Spleen (tissue), 13 donors: ENCODE measurements at regions of chr3 and their contacts with region 1.

Region 1: DNA sequence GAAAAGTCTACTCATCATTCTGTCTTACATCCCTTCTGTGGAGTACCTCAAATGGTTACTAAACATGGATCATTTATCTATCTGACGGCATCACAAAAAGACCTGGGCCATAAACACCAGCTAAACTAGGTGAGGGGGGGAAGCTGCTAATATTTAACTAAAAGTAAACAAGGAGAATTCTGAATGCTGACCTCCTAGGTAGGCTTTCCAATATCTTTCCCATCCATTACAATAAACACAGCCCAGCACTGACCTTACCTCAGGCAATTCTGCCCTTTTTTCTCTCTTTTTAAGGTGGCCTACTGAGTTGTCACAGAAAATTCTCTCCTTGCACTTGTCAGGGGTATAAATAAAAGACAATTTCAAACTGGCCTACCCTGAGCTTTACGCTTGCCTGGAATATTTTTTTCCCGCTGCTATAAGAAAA is 33.1 kb downstream of the USF3 start:
- DNase-seq: no peak
- H3K4me3 ChIP-seq: no peak overlapping the region
- H3K27ac ChIP-seq: peak overlapping the region in 1 of 8 donors; percentile 75
- H3K4me1 ChIP-seq: peaks cover 0 to 55% (median 21%) of the 10 kb centered on the region in 6 donors
- H3K27me3 ChIP-seq: no peaks in the 10 kb centered on the region
- CTCF ChIP-seq: no peak
- POLR2A ChIP-seq: no peak

Region 2: DNA sequence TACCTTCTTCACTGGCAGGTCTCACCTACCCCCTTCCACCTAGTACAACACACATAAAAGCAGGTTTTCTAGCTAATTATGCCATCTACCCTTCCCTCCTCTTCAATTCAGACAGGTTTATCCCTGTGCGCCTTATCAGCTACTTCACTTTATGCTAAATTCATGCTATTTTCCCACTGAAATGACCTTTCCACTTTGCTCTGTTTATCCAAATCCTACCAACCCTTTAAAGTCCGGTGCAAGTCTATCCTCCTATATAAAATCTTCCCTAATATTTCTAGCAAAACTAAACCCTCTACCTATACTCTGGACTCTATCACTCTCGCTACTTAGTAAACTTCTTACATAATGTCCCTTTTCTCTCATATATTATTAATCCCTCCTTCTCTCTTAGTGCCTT is 27.1 kb after region 1 on chr3:
- intact Hi-C with region 1: loop called (anchors 2 kb)
- DNase-seq: no peak
- H3K4me3 ChIP-seq: no peak overlapping the region
- H3K27ac ChIP-seq: no peak overlapping the region
- H3K4me1 ChIP-seq: peaks cover 10 to 63% (median 30%) of the 10 kb centered on the region in 6 donors
- H3K27me3 ChIP-seq: no peaks in the 10 kb centered on the region
- CTCF ChIP-seq: no peak
- POLR2A ChIP-seq: no peak